Tibial artery (tissue), 4 donors: ENCODE measurements at regions of chr2 and their contacts with region 1.

Region 1: DNA sequence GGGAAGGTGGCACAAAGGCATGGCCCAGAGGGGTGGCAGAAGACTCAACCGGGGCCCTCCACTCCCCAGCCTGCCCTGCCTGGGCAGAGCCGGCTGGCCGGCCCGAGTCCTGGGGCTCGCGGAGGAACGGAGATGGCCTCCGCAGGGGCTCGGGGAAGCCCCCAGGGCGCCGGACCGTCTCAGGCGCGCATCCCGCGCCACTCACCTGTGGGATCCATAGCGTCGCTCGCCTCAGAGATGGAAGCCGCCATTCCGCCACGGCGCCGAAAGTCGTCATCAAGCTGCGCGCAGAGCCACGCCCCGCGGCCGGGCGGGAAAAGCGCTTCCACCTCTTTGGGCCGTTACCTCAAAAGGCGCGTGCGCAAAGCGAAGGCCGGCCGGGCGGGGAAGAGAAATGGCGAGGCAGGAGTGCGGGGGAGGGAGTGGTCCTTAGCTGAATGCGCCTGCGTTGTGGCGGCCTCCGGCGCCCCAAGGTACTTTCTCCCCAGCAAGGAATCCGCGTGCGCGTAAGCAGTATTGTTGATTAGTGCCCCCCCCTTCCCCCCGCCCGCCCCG is at the start of gene SMPD4:
- DNase-seq: peak; percentile 96 to 98
- H3K4me3 ChIP-seq: peak within 1 kb of the TSS; percentile 97
- H3K27ac ChIP-seq: peak within 1 kb of the TSS; percentile 88 to 91
- H3K4me1 ChIP-seq: peaks cover 0 to 31% (median 18%) of the 10 kb centered on the region in 4 donors
- H3K27me3 ChIP-seq: no peaks in the 10 kb centered on the region
- CTCF ChIP-seq: no peak

Region 2: GRCh38 chr2:130252880-130253645 is 71.7 kb after region 1 on chr2:
- intact Hi-C with region 1: no loop called
- DNase-seq: no peak
- H3K4me3 ChIP-seq: peak overlapping the region in 1 of 2 donors; percentile 33
- H3K27ac ChIP-seq: no peak overlapping the region
- H3K4me1 ChIP-seq: peaks cover 0 to 9% (median 0%) of the 10 kb centered on the region in 4 donors
- H3K27me3 ChIP-seq: peaks cover 0 to 35% of the 10 kb centered on the region in 2 donors
- CTCF ChIP-seq: no peak

Region 3: GRCh38 chr2:130342533-130343275 is 161.3 kb after region 1 on chr2 and contains the start of gene IMP4:
- intact Hi-C with region 1: loop called (anchors 5 kb)
- DNase-seq: peak; percentile 99
- H3K4me3 ChIP-seq: peak within 1 kb of the TSS; percentile 77 to 86
- H3K27ac ChIP-seq: peak within 1 kb of the TSS; percentile 84 to 88
- H3K4me1 ChIP-seq: peaks cover 0 to 23% (median 13%) of the 10 kb centered on the region in 4 donors
- H3K27me3 ChIP-seq: no peaks in the 10 kb centered on the region
- CTCF ChIP-seq: peak; percentile 5 to 13

Region 4: DNA sequence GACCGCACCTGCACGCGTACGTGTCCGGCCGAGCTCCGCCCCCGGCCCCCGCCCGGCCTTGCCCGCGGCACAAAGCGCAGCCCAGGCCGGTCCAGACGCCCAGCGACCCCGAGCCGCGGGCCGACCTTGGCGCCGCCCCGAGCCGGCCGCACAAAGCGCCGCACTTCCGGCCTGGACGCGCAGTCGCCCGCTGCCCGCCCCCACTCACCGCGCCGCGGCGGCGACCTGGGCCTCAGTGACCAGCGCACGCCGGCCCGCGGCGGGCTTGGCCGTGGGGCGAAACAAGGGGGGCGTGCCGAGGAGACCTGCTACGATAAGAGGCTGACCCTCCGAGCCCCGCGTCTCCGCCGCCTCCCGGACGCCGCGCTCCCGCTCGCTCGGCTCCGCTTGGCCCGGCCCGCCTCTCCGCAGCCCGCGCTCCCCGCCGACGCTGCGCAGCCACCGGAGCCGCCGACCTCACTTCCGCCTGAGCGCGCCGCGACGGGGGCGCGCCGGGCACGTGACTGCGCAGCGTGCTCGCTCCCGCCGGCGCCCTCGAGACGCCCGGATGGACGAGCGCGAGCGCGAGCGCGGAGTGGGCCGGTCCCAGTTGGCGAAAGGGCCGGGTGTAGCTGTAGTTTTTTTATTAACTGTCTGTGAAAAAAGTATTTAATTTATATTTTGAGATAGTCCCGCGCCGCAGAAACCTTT is 911.7 kb after region 1 on chr2 and contains the start of gene FAM168B:
- intact Hi-C with region 1: loop called (anchors 10 kb)
- DNase-seq: peak; percentile 81 to 92
- H3K4me3 ChIP-seq: peak within 1 kb of the TSS; percentile 73 to 91
- H3K27ac ChIP-seq: peak within 1 kb of the TSS; percentile 95 to 96
- H3K4me1 ChIP-seq: peaks cover 0 to 20% (median 13%) of the 10 kb centered on the region in 4 donors
- H3K27me3 ChIP-seq: no peaks in the 10 kb centered on the region
- CTCF ChIP-seq: no peak

Region 5: DNA sequence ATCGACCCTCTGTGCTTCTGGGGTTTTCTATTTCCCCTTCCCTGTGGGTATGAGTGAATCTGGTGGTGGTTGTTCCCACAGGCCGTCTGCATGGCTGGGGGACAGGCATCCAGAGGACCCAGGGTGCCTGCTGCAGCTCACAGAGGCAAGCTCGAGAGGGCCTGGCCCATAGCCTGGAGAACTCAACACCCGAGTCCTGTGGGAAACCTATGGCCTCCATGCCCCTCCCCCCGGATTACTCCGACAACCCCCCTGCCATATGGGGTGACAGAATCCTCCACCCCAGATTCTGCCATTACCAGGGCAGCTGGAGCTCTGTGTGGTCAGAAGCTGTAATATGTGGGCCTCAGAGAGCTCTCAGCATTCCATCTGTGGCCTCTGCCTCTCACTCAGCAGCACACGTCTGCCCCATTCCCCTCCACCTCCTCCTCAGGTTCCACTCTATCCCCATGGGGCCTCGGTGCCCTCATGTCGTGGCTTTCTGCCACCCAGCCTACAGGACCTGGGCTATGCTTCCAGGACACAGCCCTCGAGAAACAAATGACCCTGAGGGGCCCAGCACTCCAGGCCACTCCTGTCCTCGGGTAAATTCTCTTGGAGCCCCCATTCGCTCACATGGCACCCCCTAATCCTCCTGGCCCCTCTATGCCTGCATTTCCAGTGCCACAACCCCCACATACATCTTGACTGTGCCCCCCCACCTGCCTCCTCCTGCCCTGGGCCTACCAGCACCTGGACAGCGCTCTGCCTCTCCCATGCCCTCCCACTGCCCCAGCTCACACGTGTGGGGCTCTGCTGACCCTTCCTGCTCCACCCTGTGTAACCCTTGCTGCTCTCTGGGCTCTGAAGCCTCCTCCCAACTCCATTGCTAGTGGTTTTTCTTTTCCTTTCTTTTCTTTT is 1307.2 kb after region 1 on chr2:
- intact Hi-C with region 1: loop called (anchors 2 kb)
- DNase-seq: no peak
- H3K4me3 ChIP-seq: no peak overlapping the region
- H3K27ac ChIP-seq: no peak overlapping the region
- H3K4me1 ChIP-seq: peaks cover 0 to 9% (median 7%) of the 10 kb centered on the region in 4 donors
- H3K27me3 ChIP-seq: no peaks in the 10 kb centered on the region
- CTCF ChIP-seq: no peak